ENCODE measurements at regions of chr15 and their contacts with region 1.

Region 1: DNA sequence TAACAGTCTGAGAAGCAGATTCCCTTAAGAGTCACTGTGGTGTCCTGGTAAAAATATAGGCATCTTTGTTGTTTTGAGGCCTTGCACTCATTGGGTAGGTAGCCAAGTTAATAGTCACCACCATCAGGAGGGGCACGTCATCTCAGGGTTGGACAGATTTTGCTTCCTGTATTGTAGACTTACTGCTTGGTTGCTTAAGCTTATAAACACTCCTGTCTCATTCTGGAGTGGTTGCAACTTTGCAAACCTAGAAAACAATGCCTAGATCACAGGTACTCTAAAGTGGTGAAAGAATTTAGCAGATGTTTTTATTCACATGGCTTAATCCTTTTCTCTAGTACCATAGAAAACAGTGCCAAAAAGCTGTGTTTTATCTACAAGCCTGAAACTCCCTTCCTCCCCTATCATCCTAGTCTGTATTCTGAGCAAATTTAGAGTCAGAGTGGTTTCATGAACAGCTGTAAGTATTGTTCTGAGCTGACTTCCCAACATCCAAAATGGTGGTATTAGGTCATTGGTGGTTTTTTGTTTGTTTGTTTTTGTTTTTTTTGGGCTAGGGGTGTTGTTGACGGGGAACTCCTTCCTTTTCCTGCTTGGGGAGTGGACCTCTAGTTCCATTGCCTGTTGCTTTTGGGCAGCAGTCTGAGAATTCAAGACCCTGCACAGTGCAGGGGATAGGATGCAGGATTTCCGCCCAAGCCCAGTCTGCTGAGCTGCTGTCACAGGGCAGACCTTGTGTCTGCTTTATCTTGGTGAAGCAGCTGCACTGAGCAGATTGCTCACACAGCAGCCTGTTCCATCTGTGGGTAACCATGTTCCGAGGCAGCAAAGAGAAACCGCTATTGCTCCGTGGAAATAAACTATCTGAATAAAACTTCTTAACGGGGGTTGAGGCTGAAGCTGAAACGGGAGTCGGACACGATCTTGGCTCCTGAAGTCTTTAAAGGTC is 202.0 kb downstream of the AKAP13 start:
- DNase-seq: peak in 8 of 9 donors; percentile 51 to 72 (median 66)
- ATAC-seq: peak; percentile 73
- H3K4me3 ChIP-seq: peak overlapping the region; percentile 49
- H3K4me3 Mint-ChIP-seq: peak overlapping the region; percentile 79 to 92 (median 85)
- H3K27ac ChIP-seq: peak overlapping the region; percentile 75
- H3K27ac Mint-ChIP-seq: peak overlapping the region; percentile 83 to 99 (median 94)
- H3K4me1 ChIP-seq: peaks cover 48 to 49% of the 10 kb centered on the region in 2 donors
- H3K4me1 Mint-ChIP-seq: peaks cover 56 to 77% (median 74%) of the 10 kb centered on the region in 7 donors
- H3K27me3 ChIP-seq: no peaks in the 10 kb centered on the region
- H3K27me3 Mint-ChIP-seq: no peaks in the 10 kb centered on the region

Region 2: GRCh38 chr15:85330901-85331588 is 251.4 kb before region 1 on chr15:
- CTCF ChIA-PET with region 1: no interaction called
- POLR2A ChIA-PET with region 1: no interaction called
- intact Hi-C with region 1: loop called in 1 of 2 experiments (anchors 2 kb)
- DNase-seq: peak; percentile 12 to 71 (median 44)
- ATAC-seq: peak; percentile 70
- H3K4me3 ChIP-seq: peak overlapping the region; percentile 57
- H3K4me3 Mint-ChIP-seq: peak overlapping the region; percentile 88 to 100 (median 96)
- H3K27ac ChIP-seq: peak overlapping the region; percentile 65
- H3K27ac Mint-ChIP-seq: peak overlapping the region; percentile 74 to 97 (median 95)
- H3K4me1 ChIP-seq: peaks cover 18 to 24% of the 10 kb centered on the region in 2 donors
- H3K4me1 Mint-ChIP-seq: peaks cover 34 to 54% (median 47%) of the 10 kb centered on the region in 7 donors
- H3K27me3 ChIP-seq: no peaks in the 10 kb centered on the region
- H3K27me3 Mint-ChIP-seq: no peaks in the 10 kb centered on the region

Region 3: GRCh38 chr15:85543741-85544155 is 38.7 kb before region 1 on chr15:
- CTCF ChIA-PET with region 1: no interaction called
- POLR2A ChIA-PET with region 1: interaction called, 3 read pairs
- intact Hi-C with region 1: loop called (anchors 1 kb)
- DNase-seq: peak in 8 of 9 donors; percentile 18 to 60 (median 40)
- ATAC-seq: peak; percentile 81
- H3K4me3 ChIP-seq: no peak overlapping the region
- H3K4me3 Mint-ChIP-seq: peak overlapping the region; percentile 46 to 76 (median 63)
- H3K27ac ChIP-seq: peak overlapping the region; percentile 32
- H3K27ac Mint-ChIP-seq: peak overlapping the region; percentile 44 to 93 (median 69)
- H3K4me1 ChIP-seq: peaks cover 0 to 21% of the 10 kb centered on the region in 2 donors
- H3K4me1 Mint-ChIP-seq: peaks cover 49 to 87% (median 77%) of the 10 kb centered on the region in 7 donors
- H3K27me3 ChIP-seq: no peaks in the 10 kb centered on the region
- H3K27me3 Mint-ChIP-seq: no peaks in the 10 kb centered on the region

Region 4: DNA sequence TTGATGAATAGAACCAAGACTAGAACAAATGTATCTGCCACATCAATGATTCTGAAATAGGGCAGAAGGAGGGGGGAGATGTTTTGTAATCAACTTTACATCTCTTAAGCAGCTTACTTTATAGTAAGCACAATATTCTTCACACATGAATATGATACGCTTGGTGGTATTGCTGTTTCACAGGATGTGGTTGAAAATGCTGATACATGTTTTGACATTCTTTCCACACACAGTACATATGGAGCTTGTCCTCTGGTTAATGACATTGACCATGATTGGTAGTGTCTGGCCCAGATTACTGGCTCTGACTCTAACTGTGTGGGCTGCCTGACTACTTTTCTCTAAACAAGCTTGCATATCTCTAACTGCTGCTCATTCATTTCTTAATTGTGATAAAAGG is 43.5 kb after region 1 on chr15:
- CTCF ChIA-PET with region 1: interaction called, 4 read pairs
- POLR2A ChIA-PET with region 1: interaction called, 4 read pairs
- intact Hi-C with region 1: loop called in 1 of 2 experiments (anchors 2 kb)
- DNase-seq: peak in 4 of 9 donors; percentile 11 to 38 (median 28)
- ATAC-seq: peak; percentile 79
- H3K4me3 ChIP-seq: no peak overlapping the region
- H3K4me3 Mint-ChIP-seq: peak overlapping the region; percentile 40 to 80 (median 65)
- H3K27ac ChIP-seq: no peak overlapping the region
- H3K27ac Mint-ChIP-seq: peak overlapping the region; percentile 5 to 88 (median 73)
- H3K4me1 ChIP-seq: peaks cover 26 to 44% of the 10 kb centered on the region in 2 donors
- H3K4me1 Mint-ChIP-seq: peaks cover 48 to 71% (median 58%) of the 10 kb centered on the region in 7 donors
- H3K27me3 ChIP-seq: no peaks in the 10 kb centered on the region
- H3K27me3 Mint-ChIP-seq: no peaks in the 10 kb centered on the region

Region 5: GRCh38 chr15:85707519-85708338 is 125.3 kb after region 1 on chr15:
- CTCF ChIA-PET with region 1: no interaction called
- POLR2A ChIA-PET with region 1: interaction called, 3 read pairs
- intact Hi-C with region 1: loop called in 1 of 2 experiments (anchors 2 kb)
- DNase-seq: peak in 1 of 9 donors; percentile 57
- ATAC-seq: peak; percentile 35
- H3K4me3 ChIP-seq: peak overlapping the region; percentile 44
- H3K4me3 Mint-ChIP-seq: peak overlapping the region; percentile 77 to 93 (median 89)
- H3K27ac ChIP-seq: peak overlapping the region; percentile 84
- H3K27ac Mint-ChIP-seq: peak overlapping the region; percentile 94 to 100 (median 98)
- H3K4me1 ChIP-seq: peaks cover 50 to 66% of the 10 kb centered on the region in 2 donors
- H3K4me1 Mint-ChIP-seq: peaks cover 48 to 89% (median 84%) of the 10 kb centered on the region in 7 donors
- H3K27me3 ChIP-seq: no peaks in the 10 kb centered on the region
- H3K27me3 Mint-ChIP-seq: no peaks in the 10 kb centered on the region

Measured in naive thymus-derived CD4-positive, alpha-beta T cell (primary cell).